Activated CD4-positive, alpha-beta T cell treated with anti-CD3 and anti-CD28 coated beads, Interleukin-2, amount 10 ng/mL, durations not matched to agents 24 days and 14 days (primary cell): ENCODE measurements at regions of chr5 and their contacts with region 1.

Region 1: GRCh38 chr5:91383027-91383955 is at the start of gene ARRDC3:
- DNase-seq: peak; percentile 99
- H3K4me3 Mint-ChIP-seq: peak within 1 kb of the TSS; percentile 94
- H3K27ac Mint-ChIP-seq: peak within 1 kb of the TSS; percentile 99
- H3K4me1 Mint-ChIP-seq: peaks cover 24% of the 10 kb centered on the region
- H3K27me3 Mint-ChIP-seq: peaks cover 4% of the 10 kb centered on the region
- total RNA-seq, gene ARRDC3: 12.4 and 13.1 TPM in 2 replicates

Region 2: DNA sequence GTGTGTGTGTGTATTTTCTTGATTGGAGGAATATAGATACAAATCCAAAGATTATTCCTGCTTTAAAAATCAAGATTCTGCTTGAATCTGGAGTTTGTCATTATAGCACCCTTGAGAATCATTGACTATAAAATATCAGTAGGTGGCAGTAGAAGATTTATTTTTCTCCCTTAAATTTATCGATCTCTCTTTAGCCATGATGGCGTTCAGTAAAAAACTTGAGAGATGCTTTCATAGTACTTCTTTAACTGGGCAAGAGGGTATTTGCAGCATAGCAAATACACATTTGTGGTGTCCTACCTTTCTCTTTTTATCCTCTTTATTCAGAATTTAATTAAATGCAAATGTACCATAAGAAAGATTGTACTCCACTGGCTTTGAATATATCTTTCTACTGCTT is 517.0 kb before region 1 on chr5:
- intact Hi-C with region 1: loop called (anchors 1 kb)
- DNase-seq: no peak
- H3K4me3 Mint-ChIP-seq: no peak overlapping the region
- H3K27ac Mint-ChIP-seq: no peak overlapping the region
- H3K4me1 Mint-ChIP-seq: no peaks in the 10 kb centered on the region
- H3K27me3 Mint-ChIP-seq: peaks cover 21% of the 10 kb centered on the region

Region 3: DNA sequence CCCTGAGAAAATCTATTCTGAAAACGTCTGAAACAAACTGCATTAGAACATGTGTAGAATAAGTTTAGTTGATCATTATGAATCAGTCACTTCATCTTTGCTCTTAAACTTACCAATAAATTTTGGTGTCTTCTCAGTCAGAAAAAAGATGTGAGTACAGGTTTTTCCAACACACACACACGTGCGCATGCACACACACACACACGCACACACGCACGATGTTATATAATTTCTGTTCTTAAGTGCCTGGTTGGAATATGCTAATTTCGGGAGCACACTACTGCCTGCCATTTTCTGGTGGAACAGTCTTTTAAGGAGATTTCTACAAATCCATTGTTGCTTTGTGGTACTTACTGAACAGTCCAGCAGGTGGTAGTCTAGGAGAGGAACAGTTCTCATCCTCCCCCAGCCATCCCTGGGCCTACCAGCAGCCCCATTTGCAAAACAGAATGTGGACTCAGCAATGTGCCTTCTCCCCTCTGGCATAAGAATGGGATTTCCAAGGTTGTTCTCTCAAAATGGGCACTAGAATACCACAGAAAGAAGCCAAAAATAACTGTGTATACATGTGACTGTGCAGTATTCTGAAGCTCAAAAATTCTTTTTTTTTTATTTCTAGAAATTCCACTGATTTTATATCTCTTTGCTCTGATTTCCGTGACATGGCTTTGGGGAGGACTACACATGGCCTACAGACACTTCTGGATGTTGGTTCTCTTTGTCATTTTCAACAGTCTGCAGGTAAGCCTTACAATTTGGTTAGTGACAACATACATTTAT is 281.5 kb before region 1 on chr5:
- intact Hi-C with region 1: loop called (anchors 1 kb)
- DNase-seq: peak; percentile 83
- H3K4me3 Mint-ChIP-seq: no peak overlapping the region
- H3K27ac Mint-ChIP-seq: no peak overlapping the region
- H3K4me1 Mint-ChIP-seq: peaks cover 2% of the 10 kb centered on the region
- H3K27me3 Mint-ChIP-seq: peaks cover 21% of the 10 kb centered on the region

Region 4: DNA sequence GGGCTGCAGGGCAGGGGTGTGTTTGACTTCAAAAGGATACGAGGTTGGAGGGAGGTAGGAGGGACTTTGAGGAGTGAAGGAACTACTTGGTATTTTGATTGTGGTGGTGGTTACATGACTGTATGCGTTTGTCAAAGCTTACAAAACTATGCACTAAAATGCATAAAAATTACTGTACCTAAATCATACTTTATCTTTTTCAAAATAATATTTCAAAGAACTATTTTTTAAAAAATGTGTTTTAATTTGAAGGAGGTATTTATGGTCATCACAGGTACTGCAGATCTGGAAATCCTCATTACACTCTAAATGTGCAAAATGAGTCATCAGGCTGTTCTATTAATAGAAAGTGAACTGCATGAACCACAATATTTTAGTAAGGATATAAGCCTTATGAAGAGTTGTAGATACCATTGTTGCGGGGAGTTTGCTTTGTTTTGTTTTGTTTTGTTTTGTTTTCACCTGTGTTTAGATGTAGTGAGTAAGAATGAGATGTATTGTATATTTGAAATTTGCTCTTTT is 117.0 kb before region 1 on chr5:
- intact Hi-C with region 1: loop called (anchors 2 kb)
- DNase-seq: no peak
- H3K4me3 Mint-ChIP-seq: no peak overlapping the region
- H3K27ac Mint-ChIP-seq: no peak overlapping the region
- H3K4me1 Mint-ChIP-seq: peaks cover 22% of the 10 kb centered on the region
- H3K27me3 Mint-ChIP-seq: peaks cover 19% of the 10 kb centered on the region

Region 5: GRCh38 chr5:91361055-91361701 is 22.1 kb before region 1 on chr5:
- intact Hi-C with region 1: loop called (anchors 1 kb)
- DNase-seq: no peak
- H3K4me3 Mint-ChIP-seq: no peak overlapping the region
- H3K27ac Mint-ChIP-seq: peak overlapping the region; percentile 74
- H3K4me1 Mint-ChIP-seq: peaks cover 9% of the 10 kb centered on the region
- H3K27me3 Mint-ChIP-seq: peaks cover 21% of the 10 kb centered on the region

Region 6: GRCh38 chr5:91424638-91425436 is 41.5 kb after region 1 on chr5:
- intact Hi-C with region 1: no loop called
- DNase-seq: no peak
- H3K4me3 Mint-ChIP-seq: no peak overlapping the region
- H3K27ac Mint-ChIP-seq: no peak overlapping the region
- H3K4me1 Mint-ChIP-seq: no peaks in the 10 kb centered on the region
- H3K27me3 Mint-ChIP-seq: peaks cover 3% of the 10 kb centered on the region